ENCODE measurements at regions of chr19 and their contacts with region 1.

Region 1: GRCh38 chr19:57947208-57948134 is at the start of gene ZNF256:
- DNase-seq: peak; percentile 97
- total RNA-seq, gene ZNF256: 9.4 TPM

Region 2: DNA sequence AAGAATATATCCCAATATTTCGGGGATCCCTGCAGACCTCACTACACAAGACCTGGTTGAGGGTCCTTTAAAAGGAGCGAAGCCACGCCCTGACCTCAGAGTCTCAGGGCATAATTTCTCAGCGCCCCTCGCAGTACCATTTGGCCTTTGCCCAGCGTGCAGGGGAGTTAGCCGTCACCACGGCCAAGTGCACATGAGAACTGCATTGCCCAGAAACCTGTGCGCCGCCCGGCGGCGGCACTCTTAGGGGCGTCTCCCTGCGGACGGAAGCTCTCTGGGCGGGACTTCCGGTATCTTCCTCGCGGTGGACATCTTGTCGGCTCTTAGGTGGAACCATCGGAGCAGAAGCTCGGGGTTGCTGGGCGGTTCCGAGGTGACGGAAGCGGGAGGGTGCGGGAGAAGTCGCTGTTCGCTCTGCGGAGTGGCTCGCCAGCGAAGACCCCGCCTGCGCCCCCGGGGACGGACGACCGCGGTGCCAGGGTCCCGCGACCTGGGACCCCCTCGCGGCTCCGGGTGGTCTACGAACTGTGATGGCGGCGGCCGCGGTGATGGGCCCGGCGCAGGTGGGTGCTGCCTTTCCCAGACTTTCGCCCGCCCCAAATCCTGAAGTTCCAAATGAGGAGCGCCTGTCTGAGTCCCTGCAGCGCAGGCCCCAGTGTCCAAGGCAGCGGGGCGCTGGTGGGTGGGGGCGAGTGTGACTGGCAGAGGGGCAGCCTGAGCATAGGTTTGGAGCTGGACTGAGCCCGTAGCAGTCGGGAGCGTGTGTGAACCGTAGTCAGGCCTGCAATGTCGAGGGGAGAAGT is 333.3 kb before region 1 on chr19 and contains the start of gene ZNF134:
- intact Hi-C with region 1: loop called (anchors 5 kb)
- DNase-seq: peak; percentile 96
- total RNA-seq, gene ZNF134: 16.5 TPM

Region 3: GRCh38 chr19:57934820-57935665 is 12.4 kb before region 1 on chr19 and contains the start of gene ZNF418:
- intact Hi-C with region 1: loop called (anchors 1 kb)
- DNase-seq: no peak
- total RNA-seq, gene ZNF418: 16.5 TPM

Region 4: GRCh38 chr19:58002384-58003173 is 55.1 kb after region 1 on chr19 and contains the start of gene ZNF606:
- intact Hi-C with region 1: loop called (anchors 5 kb)
- DNase-seq: peak; percentile 95
- total RNA-seq, gene ZNF606: 13.8 TPM

Region 5: GRCh38 chr19:58059003-58059670 is 111.7 kb after region 1 on chr19 and contains the start of gene ZNF135:
- intact Hi-C with region 1: loop called (anchors 5 kb)
- DNase-seq: peak; percentile 91
- total RNA-seq, gene ZNF135: 4.2 TPM

Region 6: GRCh38 chr19:58154679-58155648 is 207.5 kb after region 1 on chr19:
- intact Hi-C with region 1: loop called (anchors 2 kb)
- DNase-seq: peak; percentile 97